ENCODE measurements at regions of chr19 and their contacts with region 1.

Region 1: GRCh38 chr19:1905071-1905862 is at the starts of genes ADAT3 and SCAMP4:
- DNase-seq: peak; percentile 94
- ATAC-seq: peak; percentile 92
- H3K4me3 Mint-ChIP-seq: peak within 1 kb of the TSS; percentile 91
- H3K27ac Mint-ChIP-seq: peak within 1 kb of the TSS; percentile 94
- H3K4me1 Mint-ChIP-seq: peaks cover 59% of the 10 kb centered on the region
- H3K27me3 Mint-ChIP-seq: no peaks in the 10 kb centered on the region
- CTCF ChIP-seq: no peak
- total RNA-seq, gene ADAT3: 8.5 and 14.1 TPM in 2 replicates
- total RNA-seq, gene SCAMP4: 47.6 and 59.7 TPM in 2 replicates

Region 2: DNA sequence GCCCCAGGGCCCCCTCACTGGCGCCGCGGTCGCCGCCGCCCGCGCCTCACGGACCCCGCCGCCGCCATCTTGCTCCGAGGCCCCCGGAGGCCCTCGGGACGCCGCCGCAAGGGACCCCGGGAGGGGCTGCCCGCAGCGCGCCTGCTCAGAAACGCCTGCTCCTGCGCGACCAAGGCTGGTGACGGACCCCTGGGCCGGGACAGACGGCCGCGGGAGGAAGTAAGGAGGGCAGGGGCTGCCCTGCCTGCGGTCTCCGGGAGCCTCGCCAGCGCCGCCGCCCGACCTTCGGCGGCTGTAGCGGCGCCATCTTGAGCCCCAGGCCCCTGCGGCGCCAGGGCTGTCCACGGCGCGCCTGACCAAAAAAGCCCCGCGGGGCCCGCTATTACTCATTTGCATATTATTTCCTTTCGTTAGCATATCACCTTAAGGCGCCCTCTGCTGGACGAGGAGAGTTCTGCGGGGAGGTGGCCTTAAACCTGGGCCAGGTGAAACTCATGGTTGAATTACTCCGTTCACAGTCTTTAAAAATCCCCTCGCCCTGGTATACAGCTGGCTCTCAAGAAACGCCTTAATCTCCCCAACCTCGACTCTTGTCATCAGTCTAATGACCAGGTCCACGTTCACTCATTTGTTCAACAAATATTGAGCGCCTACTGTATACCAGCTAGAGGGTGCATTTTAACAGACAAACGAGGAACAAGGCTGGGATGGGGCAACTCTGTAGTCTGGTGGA is 56.7 kb before region 1 on chr19 and contains the start of gene REXO1:
- CTCF ChIA-PET with region 1: interaction called, 3 read pairs
- POLR2A ChIA-PET with region 1: interaction called, 4 read pairs
- intact Hi-C with region 1: loop called (anchors 1 kb)
- DNase-seq: peak; percentile 98
- ATAC-seq: peak; percentile 74
- H3K4me3 Mint-ChIP-seq: peak within 1 kb of the TSS; percentile 88
- H3K27ac Mint-ChIP-seq: peak within 1 kb of the TSS; percentile 88
- H3K4me1 Mint-ChIP-seq: peaks cover 69% of the 10 kb centered on the region
- H3K27me3 Mint-ChIP-seq: no peaks in the 10 kb centered on the region
- CTCF ChIP-seq: peak; percentile 86
- total RNA-seq, gene REXO1: 56.3 and 69.6 TPM in 2 replicates

Region 3: GRCh38 chr19:1875646-1876495 is 29.4 kb before region 1 on chr19:
- CTCF ChIA-PET with region 1: interaction called, 3 read pairs
- POLR2A ChIA-PET with region 1: interaction called, 29 read pairs
- intact Hi-C with region 1: loop called (anchors 1 kb)
- DNase-seq: peak; percentile 86
- ATAC-seq: peak; percentile 94
- H3K4me3 Mint-ChIP-seq: peak overlapping the region; percentile 97
- H3K27ac Mint-ChIP-seq: peak overlapping the region; percentile 92
- H3K4me1 Mint-ChIP-seq: peaks cover 34% of the 10 kb centered on the region
- H3K27me3 Mint-ChIP-seq: no peaks in the 10 kb centered on the region
- CTCF ChIP-seq: no peak

Region 4: DNA sequence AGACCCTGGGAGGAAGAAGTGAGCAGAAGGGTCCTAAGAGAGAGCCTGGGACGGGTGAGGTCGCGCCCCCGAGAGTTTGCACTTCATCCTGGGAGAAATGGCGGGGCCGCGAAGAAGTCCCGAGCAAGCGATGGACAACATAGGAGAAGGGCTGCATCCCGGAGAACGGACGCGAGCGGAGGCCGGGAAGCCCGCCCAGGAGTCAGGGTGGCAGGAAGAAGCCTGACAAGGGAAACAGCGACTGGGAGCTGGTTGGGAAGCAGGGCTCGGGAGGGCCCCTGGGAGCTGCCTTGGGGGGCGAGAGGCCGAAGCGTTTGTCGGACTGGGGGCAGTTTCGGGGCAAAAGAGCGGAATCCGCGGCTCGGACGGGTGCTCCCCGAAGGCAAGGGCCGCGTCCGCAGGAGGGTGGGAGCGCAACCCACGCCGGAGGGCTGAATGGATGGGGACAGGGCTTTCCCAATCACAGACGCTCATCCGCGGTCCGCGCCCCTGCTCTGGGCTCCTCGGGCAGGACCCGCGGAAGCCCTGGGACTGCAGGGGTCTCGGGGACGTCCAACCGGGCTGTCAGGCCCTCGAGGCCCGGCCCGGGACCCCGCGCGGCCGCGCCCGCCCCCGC is 20.4 kb before region 1 on chr19:
- CTCF ChIA-PET with region 1: no interaction called
- POLR2A ChIA-PET with region 1: interaction called, 6 read pairs
- intact Hi-C with region 1: loop called (anchors 1 kb)
- DNase-seq: no peak
- ATAC-seq: peak; percentile 8
- H3K4me3 Mint-ChIP-seq: peak overlapping the region; percentile 93
- H3K27ac Mint-ChIP-seq: peak overlapping the region; percentile 82
- H3K4me1 Mint-ChIP-seq: peaks cover 41% of the 10 kb centered on the region
- H3K27me3 Mint-ChIP-seq: no peaks in the 10 kb centered on the region
- CTCF ChIP-seq: no peak

Region 5: DNA sequence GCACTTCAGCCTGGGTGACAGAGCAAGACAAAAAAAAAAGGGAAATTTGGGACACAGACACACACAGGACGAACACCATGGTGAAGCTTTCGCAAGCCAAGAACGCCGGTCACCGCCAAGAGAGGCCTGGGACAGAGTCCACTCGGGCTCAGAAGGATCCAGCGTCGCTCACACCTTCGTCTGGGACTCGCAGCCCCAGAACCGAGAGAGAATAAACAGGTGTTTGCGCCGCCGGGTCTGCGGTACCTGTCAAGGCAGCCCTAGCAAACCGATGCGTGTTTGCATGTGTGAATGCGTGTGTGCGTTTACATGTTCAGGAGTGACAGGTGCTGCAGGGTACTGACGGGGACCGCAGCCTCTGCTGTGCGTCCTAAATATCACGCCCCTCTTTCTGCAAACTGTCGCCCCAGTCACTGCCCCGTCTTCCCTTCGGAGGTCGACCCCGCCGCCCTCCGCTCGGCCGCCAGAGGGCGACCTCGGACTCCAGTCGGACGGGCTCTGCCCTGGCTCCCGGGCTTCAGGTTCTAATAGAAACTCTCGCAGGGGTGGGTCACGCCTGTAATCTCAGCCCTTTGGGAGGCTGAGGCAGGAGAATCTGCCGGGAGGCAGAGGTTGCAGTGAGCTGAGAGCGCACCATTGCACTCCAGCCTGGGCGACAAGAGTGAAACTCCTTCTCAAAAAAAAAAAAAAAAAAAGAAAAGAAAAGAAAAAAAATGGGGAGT is 23.9 kb after region 1 on chr19:
- CTCF ChIA-PET with region 1: no interaction called
- POLR2A ChIA-PET with region 1: interaction called, 12 read pairs
- intact Hi-C with region 1: loop called (anchors 2 kb)
- DNase-seq: peak; percentile 86
- ATAC-seq: peak; percentile 82
- H3K4me3 Mint-ChIP-seq: peak overlapping the region; percentile 81
- H3K27ac Mint-ChIP-seq: no peak overlapping the region
- H3K4me1 Mint-ChIP-seq: peaks cover 46% of the 10 kb centered on the region
- H3K27me3 Mint-ChIP-seq: no peaks in the 10 kb centered on the region
- CTCF ChIP-seq: peak; percentile 59

Region 6: GRCh38 chr19:1942078-1942933 is 37.0 kb after region 1 on chr19:
- CTCF ChIA-PET with region 1: no interaction called
- POLR2A ChIA-PET with region 1: interaction called, 5 read pairs
- intact Hi-C with region 1: loop called (anchors 1 kb)
- DNase-seq: peak; percentile 69
- ATAC-seq: peak; percentile 53
- H3K4me3 Mint-ChIP-seq: peak overlapping the region; percentile 91
- H3K27ac Mint-ChIP-seq: peak overlapping the region; percentile 96
- H3K4me1 Mint-ChIP-seq: peaks cover 46% of the 10 kb centered on the region
- H3K27me3 Mint-ChIP-seq: no peaks in the 10 kb centered on the region
- CTCF ChIP-seq: no peak

Region 7: DNA sequence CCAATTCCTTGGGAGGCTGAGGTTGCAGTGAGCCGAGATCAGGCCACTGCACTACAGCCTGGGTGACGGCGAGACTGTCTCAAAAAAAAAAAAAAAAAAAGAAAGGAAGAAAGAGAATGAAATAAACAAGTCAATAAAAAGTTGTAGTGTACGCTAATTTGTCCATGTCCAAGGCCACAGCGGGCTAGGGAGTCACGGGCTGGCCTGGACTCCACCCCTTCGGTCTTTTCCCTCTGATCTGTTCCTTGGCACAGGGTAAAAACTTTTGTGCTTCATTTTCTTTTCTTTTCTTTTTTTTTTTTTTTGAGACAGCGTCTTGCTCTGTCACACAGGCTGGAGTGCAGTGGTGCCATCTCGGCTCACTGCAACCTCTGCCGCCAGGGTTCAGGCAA is 165.2 kb after region 1 on chr19:
- CTCF ChIA-PET with region 1: no interaction called
- POLR2A ChIA-PET with region 1: interaction called, 12 read pairs
- intact Hi-C with region 1: no loop called
- DNase-seq: no peak
- ATAC-seq: no peak
- H3K4me3 Mint-ChIP-seq: no peak overlapping the region
- H3K27ac Mint-ChIP-seq: no peak overlapping the region
- H3K4me1 Mint-ChIP-seq: peaks cover 57% of the 10 kb centered on the region
- H3K27me3 Mint-ChIP-seq: no peaks in the 10 kb centered on the region
- CTCF ChIP-seq: no peak

Measured in activated B cell treated with CpG ODN at 0.5 μM for 24 hours (primary cell).